Posterior cingulate gyrus (tissue), 11 donors: ENCODE measurements at regions of chr10 and their contacts with region 1.

Region 1: DNA sequence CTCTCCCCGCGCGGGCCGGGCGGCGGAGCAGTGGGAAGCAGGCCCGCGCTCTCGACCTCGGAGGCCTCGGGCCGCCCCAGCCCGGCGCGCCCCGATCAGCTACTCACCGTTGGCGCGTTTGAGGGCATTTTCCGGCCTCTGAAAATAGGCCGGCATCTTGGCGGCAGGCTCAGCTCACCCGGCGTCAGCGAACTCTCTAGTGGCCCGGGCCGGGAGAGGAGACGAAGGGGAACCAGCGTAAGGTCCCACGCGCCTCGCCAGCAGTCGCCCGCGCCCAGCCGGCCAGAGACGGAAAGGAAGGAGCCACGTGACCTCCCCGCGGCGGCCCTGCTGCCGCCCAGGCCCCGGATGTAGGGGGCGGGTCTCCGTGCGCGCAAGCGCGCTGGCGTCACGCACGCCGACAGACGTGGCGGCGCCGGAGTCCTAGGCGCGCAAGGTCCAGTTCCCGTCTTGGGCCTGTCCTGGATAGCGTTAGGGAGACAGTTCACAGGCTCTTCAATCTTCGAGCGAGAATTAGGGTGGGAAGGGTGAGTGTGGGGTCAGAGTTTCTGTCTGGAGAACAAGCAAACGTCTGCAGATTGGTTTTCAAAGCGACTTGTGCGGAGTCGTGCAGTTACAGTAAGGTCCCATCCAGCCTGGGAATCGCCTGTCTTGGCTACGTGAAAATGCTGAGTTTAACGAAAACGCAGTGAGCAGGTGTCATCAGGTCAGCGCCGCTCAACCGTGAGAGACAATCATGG is at the start of gene EIF3A:
- DNase-seq: peak; percentile 88 to 99 (median 91)

Region 2: DNA sequence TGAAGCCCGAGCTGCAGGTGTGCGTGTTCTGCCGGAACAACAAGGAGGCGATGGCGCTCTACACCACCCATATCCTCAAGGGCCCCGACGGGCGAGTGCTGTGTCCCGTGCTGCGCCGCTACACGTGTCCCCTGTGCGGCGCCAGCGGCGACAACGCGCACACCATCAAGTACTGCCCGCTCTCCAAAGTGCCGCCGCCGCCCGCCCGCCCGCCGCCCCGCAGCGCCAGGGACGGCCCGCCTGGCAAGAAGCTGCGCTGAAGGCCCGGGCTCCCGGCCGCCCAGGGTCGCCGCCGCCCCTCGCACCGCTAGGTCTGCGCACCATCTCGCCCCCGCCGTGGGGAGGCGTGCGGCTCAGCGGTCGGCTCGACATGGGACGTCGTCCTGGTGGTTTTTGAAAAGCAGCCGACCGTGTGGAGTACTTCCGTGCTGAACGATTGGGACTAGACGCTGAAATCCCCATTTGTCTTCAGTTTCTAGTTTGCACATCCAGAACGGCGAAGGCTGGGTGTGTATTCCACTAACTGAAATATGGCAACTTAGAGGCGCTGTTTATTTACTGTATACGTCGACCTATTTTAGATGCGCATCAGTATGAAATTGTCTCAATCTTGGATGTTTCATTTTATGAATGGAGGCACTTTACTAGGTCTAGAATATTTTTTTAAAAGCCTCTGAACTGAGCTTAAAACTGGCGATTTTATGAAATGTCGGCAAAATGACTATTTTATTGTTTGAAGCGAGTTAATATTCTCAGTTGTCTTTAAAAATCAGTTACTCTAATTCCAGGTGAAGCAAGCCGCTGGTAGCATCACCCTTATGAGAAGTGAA is 50.1 kb before region 1 on chr10:
- intact Hi-C with region 1: loop called (anchors 5 kb)
- DNase-seq: peak in 8 of 10 donors; percentile 23 to 91 (median 40)

Region 3: DNA sequence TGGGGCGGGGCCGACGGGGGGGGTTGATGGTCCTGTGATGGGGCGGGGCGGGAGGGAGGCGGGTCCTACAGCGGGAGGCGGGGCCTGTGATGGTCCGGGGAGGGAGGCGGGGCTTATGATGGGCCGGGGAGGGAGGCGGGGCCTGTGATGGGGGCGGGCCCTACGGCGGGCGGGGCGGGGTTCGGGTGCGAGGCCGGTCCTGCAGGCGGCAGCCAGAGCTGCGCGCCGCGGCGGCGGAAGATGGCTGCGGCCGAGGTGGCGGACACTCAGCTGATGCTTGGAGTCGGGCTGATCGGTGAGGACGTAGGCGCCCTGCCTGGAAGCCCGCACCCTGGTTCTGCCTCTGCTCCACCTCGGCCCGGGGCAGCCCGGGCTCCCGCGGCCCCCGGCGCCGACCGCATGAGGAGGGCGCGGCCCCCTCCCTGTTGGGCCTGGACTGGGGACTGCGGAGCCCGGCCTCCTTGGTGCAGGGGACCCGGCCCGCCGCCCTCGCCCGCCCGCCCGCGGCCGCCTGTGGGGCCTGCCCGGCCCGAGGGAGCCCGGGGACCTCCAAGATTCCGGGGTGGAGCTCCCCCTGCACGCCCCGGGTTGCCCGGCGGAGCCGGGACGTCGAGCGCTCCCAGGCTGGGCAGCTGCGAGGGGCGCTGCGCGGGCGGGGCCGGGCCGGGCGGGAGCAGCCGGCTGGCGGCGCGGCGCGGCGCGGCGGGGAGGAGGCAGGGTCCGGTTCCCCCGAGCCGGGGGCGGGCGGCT is 23.4 kb after region 1 on chr10 and contains the start of gene DENND10:
- intact Hi-C with region 1: loop called (anchors 2 kb)
- DNase-seq: peak; percentile 72 to 97 (median 84)

Region 4: GRCh38 chr10:119207367-119207668 is 126.6 kb after region 1 on chr10 and contains the start of gene GRK5:
- intact Hi-C with region 1: no loop called
- DNase-seq: peak; percentile 88 to 99 (median 92)